K562 (cell line): ENCODE measurements at regions of chr2 and their contacts with region 1.

Region 1: GRCh38 chr2:32372519-32373182 is 15.8 kb downstream of the BIRC6 start:
- DNase-seq: no peak
- ATAC-seq: no peak
- H3K4me3 ChIP-seq: no peak overlapping the region
- H3K27ac ChIP-seq: no peak overlapping the region
- H3K4me1 ChIP-seq: 0 out of 5 replicates have a peak, but pooled peaks cover 0 to 3% of the 10 kb centered on the region in 2 experiments
- H3K27me3 ChIP-seq: no peaks in the 10 kb centered on the region
- CTCF ChIP-seq: no peak
- EP300 ChIP-seq: no peak
- POLR2A ChIP-seq: no peak
- RAD21 ChIP-seq: no peak

Region 2: DNA sequence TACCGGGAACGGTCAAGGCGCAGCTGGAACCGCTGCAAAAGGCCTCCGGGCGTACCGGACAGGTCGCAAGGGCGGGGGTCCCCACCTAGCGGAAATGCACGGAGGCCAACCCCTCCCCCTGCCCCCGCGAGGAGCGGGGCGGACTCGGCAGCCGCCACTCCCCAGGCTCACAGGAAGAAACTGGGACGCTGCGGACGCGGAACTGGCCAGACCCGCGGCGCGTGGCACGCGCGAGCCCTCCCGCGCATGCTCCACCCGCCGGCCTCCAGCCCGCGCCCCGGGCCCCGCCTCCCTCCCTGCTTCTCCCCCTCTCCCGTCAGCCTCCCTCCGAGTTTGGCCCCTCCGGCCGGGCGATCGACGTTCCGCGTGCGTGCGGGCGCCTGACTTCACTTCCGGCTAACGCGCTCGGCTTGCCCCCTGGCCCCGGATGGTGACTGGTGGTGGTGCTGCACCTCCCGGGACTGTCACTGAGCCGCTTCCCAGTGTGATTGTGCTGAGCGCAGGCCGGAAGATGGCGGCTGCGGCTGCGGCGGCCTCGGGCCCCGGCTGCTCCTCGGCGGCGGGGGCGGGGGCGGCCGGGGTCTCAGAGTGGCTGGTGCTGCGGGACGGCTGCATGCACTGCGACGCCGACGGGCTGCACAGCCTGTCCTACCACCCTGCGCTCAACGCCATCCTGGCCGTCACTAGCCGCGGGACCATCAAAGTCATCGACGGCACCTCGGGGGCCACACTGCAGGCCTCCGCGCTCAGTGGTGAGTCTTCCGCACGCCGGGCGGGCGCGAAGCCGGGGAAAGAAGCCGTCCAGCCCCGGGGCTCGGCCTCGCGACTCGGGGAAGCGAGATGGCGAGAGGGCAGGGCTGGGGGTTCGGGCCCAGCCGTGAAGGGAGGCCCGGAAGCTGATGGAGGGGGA is 15.7 kb before region 1 on chr2 and contains the start of gene BIRC6:
- CTCF ChIA-PET with region 1: no interaction called
- POLR2A ChIA-PET with region 1: interaction called, 11 read pairs
- in situ Hi-C with region 1: no loop called
- intact Hi-C with region 1: no loop called
- DNase-seq: peak; percentile 95 to 98 (median 97)
- ATAC-seq: peak; percentile 91
- H3K4me3 ChIP-seq: peak within 1 kb of the TSS; percentile 87
- H3K27ac ChIP-seq: peak within 1 kb of the TSS; percentile 91
- H3K4me1 ChIP-seq: peaks cover 7 to 9% of the 10 kb centered on the region in 2 experiments; a peak in 4 of 5 replicates
- H3K27me3 ChIP-seq: no peaks in the 10 kb centered on the region
- CTCF ChIP-seq: peak in 1 of 3 experiments; percentile 13; a peak in 2 of 6 replicates
- EP300 ChIP-seq: peak; percentile 39
- POLR2A ChIP-seq: peak; percentile 95
- RAD21 ChIP-seq: no peak
- polyA plus RNA-seq, gene BIRC6: 18.8 to 30.7 TPM